ENCODE measurements at regions of chr14 and their contacts with region 1.

Region 1: GRCh38 chr14:91985521-91986255 is 38.2 kb upstream of the FBLN5 start:
- DNase-seq: no peak
- H3K4me3 ChIP-seq: no peak overlapping the region
- H3K27ac ChIP-seq: no peak overlapping the region
- H3K4me1 ChIP-seq: no peaks in the 10 kb centered on the region
- H3K27me3 ChIP-seq: peaks cover 0 to 1% (median 0%) of the 10 kb centered on the region in 4 experiments; a peak in 1 of 7 replicates
- CTCF ChIP-seq: no peak
- EP300 ChIP-seq: no peak
- POLR2A ChIP-seq: no peak
- RAD21 ChIP-seq: no peak

Region 2: GRCh38 chr14:91931478-91932088 is 54.1 kb before region 1 on chr14:
- CTCF ChIA-PET with region 1: no interaction called
- POLR2A ChIA-PET with region 1: no interaction called
- DNase-seq: no peak
- H3K4me3 ChIP-seq: no peak overlapping the region
- H3K27ac ChIP-seq: no peak overlapping the region
- H3K4me1 ChIP-seq: 0 out of 7 replicates have a peak, but pooled peaks cover 0 to 3% (median 0%) of the 10 kb centered on the region in 4 experiments
- H3K27me3 ChIP-seq: no peaks in the 10 kb centered on the region
- CTCF ChIP-seq: no peak
- EP300 ChIP-seq: no peak
- POLR2A ChIP-seq: no peak
- RAD21 ChIP-seq: no peak

Region 3: DNA sequence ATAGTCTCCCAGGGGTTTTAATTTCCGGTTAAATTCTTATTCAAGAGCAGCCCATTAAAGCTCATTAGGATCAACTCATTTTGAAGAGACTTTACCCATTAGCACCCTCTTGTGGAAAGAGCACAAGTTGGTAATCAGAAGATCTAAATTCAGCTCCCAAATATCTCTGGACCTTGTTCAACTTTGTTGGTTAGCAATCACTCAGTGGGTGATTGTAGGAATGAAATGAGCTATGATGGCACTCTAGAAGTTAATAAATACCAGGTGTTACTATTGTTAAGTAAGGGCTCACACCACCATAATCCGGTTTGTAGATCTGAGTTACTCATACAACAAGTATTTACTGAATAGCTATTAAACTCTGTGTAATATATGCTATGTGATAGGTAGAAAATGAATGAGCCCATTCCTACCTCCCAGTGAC is 11.3 kb after region 1 on chr14:
- CTCF ChIA-PET with region 1: interaction called, 14 read pairs
- POLR2A ChIA-PET with region 1: interaction called, 3 read pairs
- DNase-seq: no peak
- H3K4me3 ChIP-seq: no peak overlapping the region
- H3K27ac ChIP-seq: no peak overlapping the region
- H3K4me1 ChIP-seq: no peaks in the 10 kb centered on the region
- H3K27me3 ChIP-seq: no peaks in the 10 kb centered on the region
- CTCF ChIP-seq: peak in 2 of 3 experiments; percentile 36 to 62; a peak in 2 of 4 replicates
- EP300 ChIP-seq: no peak
- POLR2A ChIP-seq: no peak
- RAD21 ChIP-seq: peak; percentile 52 to 61

Measured in H1 (cell line).